ENCODE measurements at regions of chr4 and their contacts with region 1.

Region 1: GRCh38 chr4:27684610-27685011 is 824.0 kb downstream of the STIM2 start:
- DNase-seq: peak in 1 of 2 experiments; percentile 72
- H3K4me3 ChIP-seq: no peak overlapping the region
- H3K27ac ChIP-seq: no peak overlapping the region
- H3K4me1 ChIP-seq: no peaks in the 10 kb centered on the region
- H3K27me3 ChIP-seq: no peaks in the 10 kb centered on the region
- CTCF ChIP-seq: peak; percentile 76 to 84 (median 77)
- EP300 ChIP-seq: no peak
- POLR2A ChIP-seq: no peak
- RAD21 ChIP-seq: peak; percentile 90 to 93

Region 2: DNA sequence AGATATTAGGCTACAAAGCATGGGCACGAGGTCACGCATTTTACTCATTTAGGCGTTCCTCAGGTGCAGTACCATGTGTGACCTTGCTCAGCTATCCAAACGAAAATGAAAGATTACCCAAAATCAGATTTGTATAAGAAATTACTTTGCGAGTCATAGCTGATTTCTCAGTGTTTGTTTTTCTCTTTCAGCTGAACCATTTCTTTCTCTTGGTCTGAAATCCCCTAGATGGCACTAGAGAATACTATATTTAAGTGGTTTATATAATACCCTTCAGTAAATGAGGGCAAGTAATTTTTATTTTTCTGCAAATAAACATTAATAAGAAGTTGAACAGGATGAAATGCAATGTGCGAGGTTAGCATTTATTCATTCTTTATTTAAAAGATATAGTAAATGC is 327.3 kb before region 1 on chr4:
- CTCF ChIA-PET with region 1: interaction called, 12 read pairs
- POLR2A ChIA-PET with region 1: no interaction called
- DNase-seq: no peak
- H3K4me3 ChIP-seq: no peak overlapping the region
- H3K27ac ChIP-seq: no peak overlapping the region
- H3K4me1 ChIP-seq: peaks cover 0 to 5% (median 0%) of the 10 kb centered on the region in 4 experiments; a peak in 3 of 7 replicates
- H3K27me3 ChIP-seq: no peaks in the 10 kb centered on the region
- CTCF ChIP-seq: peak in 1 of 3 experiments; percentile 25; a peak in 2 of 4 replicates
- EP300 ChIP-seq: no peak
- POLR2A ChIP-seq: no peak
- RAD21 ChIP-seq: peak in 1 of 2 experiments; percentile 34; a peak in 3 of 4 replicates

Region 3: DNA sequence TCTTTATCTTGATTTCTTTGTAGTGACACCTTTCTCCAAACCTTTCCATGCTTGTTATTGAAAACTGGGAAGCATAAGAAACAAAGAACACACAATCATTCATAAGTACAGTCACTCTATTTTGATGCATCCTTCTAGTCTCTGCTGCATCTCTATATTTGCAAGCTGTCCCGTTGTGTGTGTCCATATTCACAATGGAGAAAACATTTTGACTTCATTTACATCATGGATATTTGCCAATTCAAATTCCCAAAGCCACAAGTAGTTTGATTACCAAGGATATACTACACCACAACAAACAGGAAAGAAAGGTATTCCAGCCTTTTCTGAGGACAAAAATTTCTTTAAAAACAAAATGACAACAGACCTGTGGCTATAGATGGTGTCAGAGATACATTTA is 150.1 kb before region 1 on chr4:
- CTCF ChIA-PET with region 1: no interaction called
- POLR2A ChIA-PET with region 1: no interaction called
- DNase-seq: no peak
- H3K4me3 ChIP-seq: no peak overlapping the region
- H3K27ac ChIP-seq: no peak overlapping the region
- H3K4me1 ChIP-seq: peaks cover 0 to 2% (median 0%) of the 10 kb centered on the region in 4 experiments; a peak in 1 of 7 replicates
- H3K27me3 ChIP-seq: no peaks in the 10 kb centered on the region
- CTCF ChIP-seq: no peak
- EP300 ChIP-seq: no peak
- POLR2A ChIP-seq: no peak
- RAD21 ChIP-seq: no peak

Region 4: DNA sequence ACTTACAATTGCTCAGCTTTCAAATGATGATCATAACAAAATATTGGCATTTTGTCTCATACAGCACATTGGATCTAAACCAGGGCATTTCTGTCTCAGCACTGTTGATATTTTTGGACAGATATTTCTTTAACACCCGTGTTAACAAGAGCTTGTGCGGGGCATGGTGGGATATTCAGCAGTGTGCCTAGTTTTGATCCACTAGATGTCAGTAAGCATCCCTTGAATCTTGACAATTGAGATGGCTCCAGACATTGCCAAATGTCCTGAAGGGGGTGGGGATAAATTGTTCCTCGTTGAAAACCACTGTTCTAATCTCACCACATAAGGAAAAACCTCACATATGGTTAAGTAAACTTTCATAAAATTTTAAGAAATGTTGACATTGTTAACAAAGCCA is 17.7 kb before region 1 on chr4:
- CTCF ChIA-PET with region 1: interaction called, 40 read pairs
- POLR2A ChIA-PET with region 1: no interaction called
- DNase-seq: no peak
- H3K4me3 ChIP-seq: no peak overlapping the region
- H3K27ac ChIP-seq: no peak overlapping the region
- H3K4me1 ChIP-seq: peaks cover 0 to 4% (median 1%) of the 10 kb centered on the region in 4 experiments; a peak in 2 of 7 replicates
- H3K27me3 ChIP-seq: no peaks in the 10 kb centered on the region
- CTCF ChIP-seq: peak in 2 of 3 experiments; percentile 37 to 45; a peak in 2 of 4 replicates
- EP300 ChIP-seq: no peak
- POLR2A ChIP-seq: no peak
- RAD21 ChIP-seq: peak; percentile 46 to 63

Region 5: GRCh38 chr4:27716693-27717430 is 32.3 kb after region 1 on chr4:
- CTCF ChIA-PET with region 1: interaction called, 12 read pairs
- POLR2A ChIA-PET with region 1: no interaction called
- DNase-seq: no peak
- H3K4me3 ChIP-seq: no peak overlapping the region
- H3K27ac ChIP-seq: no peak overlapping the region
- H3K4me1 ChIP-seq: peaks cover 0 to 2% (median 1%) of the 10 kb centered on the region in 4 experiments; a peak in 2 of 7 replicates
- H3K27me3 ChIP-seq: no peaks in the 10 kb centered on the region
- CTCF ChIP-seq: peak in 1 of 3 experiments; percentile 38; a peak in 1 of 4 replicates
- EP300 ChIP-seq: no peak
- POLR2A ChIP-seq: no peak
- RAD21 ChIP-seq: peak in 1 of 2 experiments; percentile 23; a peak in 1 of 4 replicates

Region 6: DNA sequence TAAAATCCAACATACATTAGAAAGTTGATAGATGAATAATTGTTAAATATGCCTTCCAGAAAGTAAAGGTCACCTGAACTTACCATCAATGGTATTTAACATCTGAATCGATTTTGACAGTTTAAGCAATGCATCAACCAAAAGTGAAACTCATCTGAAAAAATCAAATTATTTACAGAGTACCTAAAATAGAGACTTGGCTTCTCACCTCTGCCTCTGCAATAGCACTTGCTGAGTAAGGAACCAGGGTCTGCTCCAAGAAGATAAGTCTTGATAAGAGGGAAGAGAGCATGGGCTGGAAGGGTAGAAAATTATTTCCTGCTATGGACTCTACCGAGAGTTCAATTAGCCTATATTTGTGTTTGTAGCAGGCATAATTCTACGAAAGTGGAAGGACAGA is 44.3 kb after region 1 on chr4:
- CTCF ChIA-PET with region 1: no interaction called
- POLR2A ChIA-PET with region 1: no interaction called
- DNase-seq: no peak
- H3K4me3 ChIP-seq: no peak overlapping the region
- H3K27ac ChIP-seq: no peak overlapping the region
- H3K4me1 ChIP-seq: no peaks in the 10 kb centered on the region
- H3K27me3 ChIP-seq: no peaks in the 10 kb centered on the region
- CTCF ChIP-seq: no peak
- EP300 ChIP-seq: no peak
- POLR2A ChIP-seq: no peak
- RAD21 ChIP-seq: no peak

Region 7: GRCh38 chr4:27836523-27836922 is 151.9 kb after region 1 on chr4:
- CTCF ChIA-PET with region 1: no interaction called
- POLR2A ChIA-PET with region 1: no interaction called
- DNase-seq: no peak
- H3K4me3 ChIP-seq: no peak overlapping the region
- H3K27ac ChIP-seq: no peak overlapping the region
- H3K4me1 ChIP-seq: no peaks in the 10 kb centered on the region
- H3K27me3 ChIP-seq: no peaks in the 10 kb centered on the region
- CTCF ChIP-seq: no peak
- EP300 ChIP-seq: no peak
- POLR2A ChIP-seq: no peak
- RAD21 ChIP-seq: no peak

Region 8: GRCh38 chr4:27846951-27847350 is 162.3 kb after region 1 on chr4:
- CTCF ChIA-PET with region 1: interaction called, 10 read pairs
- POLR2A ChIA-PET with region 1: no interaction called
- DNase-seq: no peak
- H3K4me3 ChIP-seq: no peak overlapping the region
- H3K27ac ChIP-seq: no peak overlapping the region
- H3K4me1 ChIP-seq: no peaks in the 10 kb centered on the region
- H3K27me3 ChIP-seq: no peaks in the 10 kb centered on the region
- CTCF ChIP-seq: no peak
- EP300 ChIP-seq: no peak
- POLR2A ChIP-seq: no peak
- RAD21 ChIP-seq: no peak

Measured in H1 (cell line).